Esophagus squamous epithelium (tissue), 5 donors: ENCODE measurements at regions of chr4 and their contacts with region 1.

Region 1: DNA sequence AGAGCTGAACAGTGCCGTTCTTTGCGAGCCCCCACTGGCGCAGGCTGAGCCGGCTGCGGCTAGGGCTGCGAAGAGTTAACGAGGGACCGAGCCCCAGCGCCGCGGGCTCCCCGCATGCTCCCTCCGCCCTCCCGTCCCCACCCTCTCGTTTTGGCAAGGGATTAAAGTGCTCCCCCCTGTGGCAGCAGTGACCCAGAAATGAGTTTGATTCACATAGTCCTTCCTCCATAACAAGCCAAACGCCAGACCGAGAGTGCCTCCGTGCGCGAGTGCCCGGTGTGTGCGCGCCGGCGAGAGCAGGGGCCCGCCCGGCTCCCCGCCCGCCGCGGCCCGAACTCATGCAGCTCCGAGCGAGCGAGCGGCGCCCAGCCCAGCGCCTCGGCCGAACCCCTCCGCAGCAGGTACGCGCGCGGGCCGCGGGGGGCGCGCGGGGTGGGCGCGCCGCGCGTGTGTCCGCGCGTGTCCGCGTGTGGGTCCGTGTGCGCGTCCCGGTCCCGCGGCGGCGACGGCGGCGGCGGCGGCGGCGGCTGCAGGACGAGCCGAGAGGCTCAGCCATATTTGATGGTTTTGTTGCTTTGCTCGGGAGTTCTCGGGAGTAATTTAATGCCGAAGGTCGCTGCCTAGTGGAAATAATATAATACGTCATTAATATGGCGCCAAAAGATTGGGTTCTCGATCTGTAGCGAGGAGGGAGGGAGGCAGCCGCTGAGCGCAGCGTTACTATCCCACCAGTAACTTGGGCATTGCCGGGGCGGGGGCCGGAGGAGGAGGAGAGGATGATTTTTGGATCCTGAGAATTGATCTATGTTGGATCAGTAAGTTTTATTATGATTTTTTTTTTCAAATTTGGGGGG is at the start of gene JADE1:
- DNase-seq: peak; percentile 53
- H3K4me3 ChIP-seq: peak within 1 kb of the TSS; percentile 71 to 74 (median 72)
- H3K27ac ChIP-seq: peak within 1 kb of the TSS; percentile 82 to 99 (median 90)
- H3K4me1 ChIP-seq: peaks cover 3 to 23% (median 6%) of the 10 kb centered on the region in 3 donors
- H3K27me3 ChIP-seq: no peaks in the 10 kb centered on the region
- CTCF ChIP-seq: peak; percentile 48 to 76 (median 65)
- POLR2A ChIP-seq: peak in 2 of 4 donors; percentile 64 to 70
- total RNA-seq, gene JADE1: 3.6 to 27.1 (median 8.3) TPM

Region 2: DNA sequence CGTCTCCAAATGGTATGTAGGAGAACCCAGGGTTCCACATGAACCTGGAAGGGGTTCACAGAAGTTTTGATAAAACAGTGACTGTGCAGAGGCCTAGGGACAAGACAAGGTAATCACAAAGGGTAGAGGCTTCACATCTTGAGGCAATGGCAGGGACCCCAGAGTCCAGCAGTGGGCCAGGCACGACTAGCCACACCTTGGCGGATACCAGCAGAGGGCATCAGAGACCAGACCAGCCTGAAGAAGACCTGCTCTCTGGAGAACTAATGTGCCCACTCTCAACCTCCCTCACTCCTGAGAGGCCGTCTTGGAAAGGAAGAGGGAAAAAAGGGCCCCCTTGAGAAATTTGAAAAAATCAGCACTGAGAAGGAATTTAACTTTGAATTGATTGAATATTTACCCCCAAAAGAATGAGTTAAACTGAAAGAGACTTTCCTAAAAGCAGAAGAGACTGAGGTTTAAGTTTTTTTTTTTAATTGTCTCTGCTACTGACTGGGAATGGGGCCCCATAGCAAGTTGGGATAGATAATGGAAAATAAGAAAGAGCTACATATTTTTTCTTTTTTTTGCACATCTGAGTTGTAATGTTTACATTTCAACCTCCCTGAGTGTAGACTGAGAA is 244.0 kb before region 1 on chr4:
- intact Hi-C with region 1: loop called (anchors 10 kb)
- DNase-seq: no peak
- H3K4me3 ChIP-seq: no peak overlapping the region
- H3K27ac ChIP-seq: no peak overlapping the region
- H3K4me1 ChIP-seq: peaks cover 0 to 18% (median 16%) of the 10 kb centered on the region in 3 donors
- H3K27me3 ChIP-seq: no peaks in the 10 kb centered on the region
- CTCF ChIP-seq: peak in 5 of 6 experiments; percentile 13 to 46 (median 29)
- POLR2A ChIP-seq: no peak

Region 3: DNA sequence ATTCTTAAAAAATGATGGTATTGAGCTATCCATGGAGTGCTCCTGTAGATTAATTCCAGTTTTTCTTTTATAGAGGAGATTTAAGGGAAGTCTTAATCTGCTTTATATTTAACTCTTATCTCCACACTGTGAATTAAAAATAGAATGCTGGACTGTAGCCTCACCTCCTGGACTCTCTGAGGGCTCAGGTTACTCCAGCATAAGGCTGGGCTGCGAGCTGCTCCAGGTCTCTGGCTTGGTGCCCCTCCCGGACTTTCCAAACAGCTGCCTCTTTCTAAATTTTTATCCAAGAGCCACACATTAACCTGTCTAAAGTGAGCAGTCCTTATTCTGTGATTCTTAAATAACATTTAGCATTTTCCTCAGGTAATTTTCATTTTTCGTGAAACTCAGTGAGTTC is 218.9 kb before region 1 on chr4:
- intact Hi-C with region 1: no loop called
- DNase-seq: no peak
- H3K4me3 ChIP-seq: no peak overlapping the region
- H3K27ac ChIP-seq: no peak overlapping the region
- H3K4me1 ChIP-seq: peaks cover 0 to 27% (median 0%) of the 10 kb centered on the region in 3 donors
- H3K27me3 ChIP-seq: no peaks in the 10 kb centered on the region
- CTCF ChIP-seq: no peak
- POLR2A ChIP-seq: no peak